HEK293 (cell line): ENCODE measurements at regions of chr20 and their contacts with region 1.

Region 1: DNA sequence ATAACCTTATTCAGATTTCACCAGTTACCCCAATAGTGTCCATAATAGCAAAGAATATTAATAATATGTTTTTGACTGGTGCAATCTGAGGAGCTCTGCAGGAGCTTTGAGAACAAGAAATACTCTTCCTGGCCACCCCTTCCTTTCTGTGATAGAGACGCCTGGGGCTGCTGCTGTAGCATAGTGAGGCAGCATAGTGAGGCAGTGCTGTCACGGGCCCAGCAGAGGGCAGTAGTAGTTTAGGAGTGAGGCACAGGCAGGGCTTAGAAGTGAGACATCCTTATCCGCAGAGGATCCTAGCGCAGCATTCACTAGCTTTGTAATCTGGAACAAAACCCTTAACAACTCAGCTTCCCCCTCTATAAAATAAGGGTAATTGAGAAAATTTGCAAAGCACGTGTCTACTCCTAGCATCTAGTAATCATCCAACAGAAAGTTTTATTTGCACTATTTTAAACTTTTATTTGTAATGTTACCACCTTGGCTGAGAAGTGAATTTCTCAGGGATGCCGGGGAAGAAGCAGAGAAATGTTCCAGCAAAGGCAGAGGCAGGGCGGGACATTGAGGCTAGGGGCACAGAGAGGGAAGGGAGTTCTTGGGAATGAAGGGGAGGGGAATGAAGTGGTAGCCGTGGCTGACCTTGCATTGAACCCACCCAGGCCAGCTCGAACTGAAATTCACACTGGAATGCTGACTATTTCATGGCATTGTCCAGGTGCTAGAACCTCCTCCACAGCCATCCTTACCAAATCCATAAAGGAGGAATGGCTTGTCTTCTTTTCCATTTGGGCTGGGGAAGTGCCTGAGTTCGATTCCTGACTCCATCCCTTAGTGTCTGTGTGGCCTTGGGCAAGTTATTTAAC is 78.8 kb downstream of the CDS2 start:
- H3K4me3 ChIP-seq: no peak overlapping the region
- H3K27ac ChIP-seq: no peak overlapping the region
- H3K4me1 ChIP-seq: no peaks in the 10 kb centered on the region
- CTCF ChIP-seq: peak; percentile 80

Region 2: DNA sequence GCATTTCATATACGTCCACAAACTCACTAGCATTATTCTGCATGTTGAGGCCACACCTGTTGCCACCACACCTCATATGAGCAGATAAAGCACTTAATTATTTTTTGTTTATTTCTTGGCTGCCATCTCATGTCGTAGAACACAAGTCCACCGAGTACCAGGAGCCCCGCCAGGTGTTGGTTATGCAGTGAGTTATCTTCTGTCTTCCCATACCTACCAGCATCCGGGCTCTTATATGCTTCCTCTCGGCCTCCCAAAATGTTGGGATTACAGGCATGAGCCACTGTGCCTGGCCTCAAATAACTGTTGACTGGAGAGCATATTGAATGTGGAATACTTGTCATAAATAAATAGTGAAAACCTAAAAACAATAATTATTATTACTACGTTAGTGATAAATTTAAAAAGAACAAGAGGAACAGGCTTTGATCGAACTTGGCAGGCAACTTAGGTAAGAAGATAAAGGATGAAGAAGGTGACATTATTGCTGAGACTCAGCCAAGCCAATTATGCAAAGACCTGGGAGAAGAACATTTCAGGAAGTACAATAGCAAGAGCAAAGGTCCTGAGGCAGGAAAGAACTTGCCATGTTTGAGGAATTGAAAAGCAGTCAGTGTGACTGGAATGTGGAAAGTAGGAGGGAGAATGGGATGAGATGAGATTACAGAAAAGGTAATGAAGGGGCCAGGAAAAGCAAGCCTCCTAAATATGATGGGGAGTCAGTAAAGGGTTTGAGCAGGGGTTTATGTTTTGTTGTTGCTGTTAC is 191.7 kb before region 1 on chr20:
- CTCF ChIA-PET with region 1: no interaction called
- POLR2A ChIA-PET with region 1: no interaction called
- H3K4me3 ChIP-seq: no peak overlapping the region
- H3K27ac ChIP-seq: no peak overlapping the region
- H3K4me1 ChIP-seq: no peaks in the 10 kb centered on the region
- CTCF ChIP-seq: no peak

Region 3: GRCh38 chr20:5114403-5114802 is 91.2 kb before region 1 on chr20:
- CTCF ChIA-PET with region 1: interaction called, 11 read pairs
- POLR2A ChIA-PET with region 1: no interaction called
- H3K4me3 ChIP-seq: no peak overlapping the region
- H3K27ac ChIP-seq: no peak overlapping the region
- H3K4me1 ChIP-seq: peaks cover 7% of the 10 kb centered on the region; the same call in 1 of the 2 replicates
- CTCF ChIP-seq: no peak

Region 4: DNA sequence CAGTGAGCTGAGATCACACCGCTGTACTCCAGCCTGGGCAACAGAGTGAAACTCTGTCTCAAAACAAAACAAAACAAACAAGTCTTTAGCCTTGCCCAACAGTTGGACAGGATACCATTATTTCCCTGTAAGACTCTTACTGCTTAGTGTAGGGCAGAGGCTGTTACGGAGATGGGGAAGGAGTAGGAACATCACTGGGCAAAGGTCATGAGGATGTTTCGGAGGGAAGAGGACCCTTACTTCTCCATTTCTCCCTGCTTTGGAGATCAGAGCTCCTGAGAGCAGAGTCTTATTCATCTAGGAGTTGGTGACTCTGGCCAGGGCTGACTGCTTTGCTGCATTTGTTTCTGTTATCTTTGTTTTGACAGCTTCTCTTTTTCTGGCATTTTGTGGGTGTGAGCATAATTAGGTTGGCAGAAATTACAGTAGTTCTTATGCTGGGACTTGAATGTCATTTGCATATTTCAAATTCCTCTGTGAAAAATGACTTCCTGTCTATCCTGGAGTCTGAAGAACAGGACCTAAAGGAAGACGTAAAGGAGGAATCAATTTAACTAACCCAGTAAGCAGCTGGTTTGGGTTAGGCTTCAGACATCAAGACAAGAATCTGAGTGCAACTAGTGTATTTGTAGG is 10.2 kb after region 1 on chr20:
- CTCF ChIA-PET with region 1: interaction called, 272 read pairs
- POLR2A ChIA-PET with region 1: no interaction called
- H3K4me3 ChIP-seq: no peak overlapping the region
- H3K27ac ChIP-seq: no peak overlapping the region
- H3K4me1 ChIP-seq: no peaks in the 10 kb centered on the region
- CTCF ChIP-seq: no peak

Region 5: DNA sequence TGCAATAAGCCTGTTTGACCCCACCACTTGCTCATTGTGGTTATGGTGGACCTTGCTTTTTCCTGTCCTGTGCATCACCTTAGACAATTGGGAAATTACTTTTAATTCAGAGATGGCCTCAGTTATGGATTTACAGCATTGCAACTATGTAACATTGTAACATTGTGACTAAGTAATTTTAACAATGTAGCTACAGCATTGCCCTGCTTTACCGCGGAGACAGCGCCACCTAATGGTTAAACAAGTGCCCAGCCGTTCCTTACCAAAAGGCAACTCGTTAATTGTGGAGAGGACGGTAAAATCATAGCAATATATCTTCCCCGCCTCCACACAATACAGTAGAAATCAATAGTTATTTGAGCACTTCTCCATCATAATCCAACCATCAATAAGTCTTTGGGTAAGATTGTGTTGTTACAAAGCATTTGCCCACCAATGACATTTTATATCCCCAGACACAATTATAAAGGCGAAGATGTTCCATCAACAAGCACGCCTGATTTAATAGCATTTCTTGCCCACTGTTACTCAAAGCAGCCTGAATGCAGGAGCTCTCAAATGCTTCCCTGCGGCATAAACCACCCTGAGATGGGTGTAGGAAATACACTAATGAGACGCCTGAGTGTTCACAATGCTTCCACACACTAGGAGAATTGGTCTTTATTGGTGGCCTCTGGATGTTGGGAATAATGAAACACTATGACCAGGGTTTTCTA is 17.5 kb after region 1 on chr20:
- CTCF ChIA-PET with region 1: interaction called, 272 read pairs
- POLR2A ChIA-PET with region 1: no interaction called
- H3K4me3 ChIP-seq: no peak overlapping the region
- H3K27ac ChIP-seq: no peak overlapping the region
- H3K4me1 ChIP-seq: no peaks in the 10 kb centered on the region
- CTCF ChIP-seq: peak; percentile 42; the same call in 1 of the 2 replicates

Region 6: GRCh38 chr20:5268449-5268848 is 62.9 kb after region 1 on chr20:
- CTCF ChIA-PET with region 1: no interaction called
- POLR2A ChIA-PET with region 1: no interaction called
- H3K4me3 ChIP-seq: no peak overlapping the region
- H3K27ac ChIP-seq: no peak overlapping the region
- H3K4me1 ChIP-seq: no peaks in the 10 kb centered on the region
- CTCF ChIP-seq: no peak

Region 7: GRCh38 chr20:5430670-5431069 is 225.1 kb after region 1 on chr20:
- CTCF ChIA-PET with region 1: interaction called, 10 read pairs
- POLR2A ChIA-PET with region 1: no interaction called
- H3K4me3 ChIP-seq: no peak overlapping the region
- H3K27ac ChIP-seq: no peak overlapping the region
- H3K4me1 ChIP-seq: no peaks in the 10 kb centered on the region
- CTCF ChIP-seq: no peak